OCI-LY7 (cell line): ENCODE measurements at regions of chr1 and their contacts with region 1.

Region 1: GRCh38 chr1:116330245-116330629 is 42.8 kb upstream of the ATP1A1 start:
- DNase-seq: peak; percentile 89
- H3K4me3 ChIP-seq: peak overlapping the region; percentile 37
- H3K27ac ChIP-seq: peak overlapping the region; percentile 89
- H3K4me1 ChIP-seq: peaks cover 100% of the 10 kb centered on the region
- CTCF ChIP-seq: no peak

Region 2: DNA sequence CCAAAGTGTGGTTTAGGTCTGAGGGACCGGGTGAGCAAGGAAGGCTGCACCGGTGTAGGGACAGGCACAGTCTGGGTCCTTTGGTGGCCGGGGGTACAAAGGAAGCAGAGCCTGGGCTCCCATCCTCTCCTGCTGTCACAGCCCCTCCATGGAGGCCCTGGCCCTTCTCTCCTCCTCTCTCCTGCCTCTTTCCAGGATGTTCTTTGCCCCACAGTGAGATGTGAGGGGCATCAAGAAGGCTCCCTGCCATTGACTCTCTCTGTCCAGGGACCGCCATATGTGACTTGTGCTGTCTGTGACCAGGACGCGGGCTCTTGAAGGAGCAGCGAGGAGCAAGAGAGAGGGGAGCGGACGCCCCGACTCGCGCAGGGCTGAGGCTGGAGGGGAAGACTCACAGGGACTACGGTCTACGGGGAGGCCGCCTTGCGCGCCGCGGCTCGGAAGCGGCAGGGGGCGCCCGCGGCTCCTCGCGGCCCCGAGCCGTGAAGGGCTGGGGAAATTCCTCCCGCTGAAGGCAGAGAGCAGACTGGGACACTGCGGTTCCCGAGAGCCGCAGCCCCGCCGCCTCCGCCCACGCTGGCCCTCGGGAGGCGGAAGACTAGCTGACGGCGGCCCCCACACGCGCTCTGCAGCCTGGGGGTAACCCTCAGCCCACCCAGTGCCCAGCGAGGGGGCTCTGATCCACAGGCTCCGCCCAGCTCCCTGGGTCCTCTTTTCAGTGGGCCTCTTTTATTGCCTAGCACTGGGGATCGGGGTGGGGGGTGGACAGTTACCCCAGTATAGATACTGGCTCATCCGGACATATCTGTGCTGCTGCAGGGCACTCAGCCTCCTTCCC is 178.3 kb before region 1 on chr1:
- CTCF ChIA-PET with region 1: no interaction called
- POLR2A ChIA-PET with region 1: interaction called, 4 read pairs
- intact Hi-C with region 1: loop called (anchors 2 kb)
- DNase-seq: peak; percentile 82
- H3K4me3 ChIP-seq: peak overlapping the region; percentile 58
- H3K27ac ChIP-seq: no peak overlapping the region
- H3K4me1 ChIP-seq: peaks cover 11% of the 10 kb centered on the region
- CTCF ChIP-seq: peak; percentile 84

Region 3: GRCh38 chr1:116232989-116233514 is 97.2 kb before region 1 on chr1:
- CTCF ChIA-PET with region 1: no interaction called
- POLR2A ChIA-PET with region 1: interaction called, 3 read pairs
- intact Hi-C with region 1: loop called (anchors 5 kb)
- DNase-seq: peak; percentile 76
- H3K4me3 ChIP-seq: no peak overlapping the region
- H3K27ac ChIP-seq: peak overlapping the region; percentile 26
- H3K4me1 ChIP-seq: peaks cover 54% of the 10 kb centered on the region
- CTCF ChIP-seq: peak; percentile 75

Region 4: GRCh38 chr1:116257341-116257767 is 72.9 kb before region 1 on chr1:
- CTCF ChIA-PET with region 1: no interaction called
- POLR2A ChIA-PET with region 1: interaction called, 4 read pairs
- intact Hi-C with region 1: loop called (anchors 1 kb)
- DNase-seq: peak; percentile 97
- H3K4me3 ChIP-seq: peak overlapping the region; percentile 24
- H3K27ac ChIP-seq: peak overlapping the region; percentile 93
- H3K4me1 ChIP-seq: peaks cover 90% of the 10 kb centered on the region
- CTCF ChIP-seq: no peak

Region 5: GRCh38 chr1:116372587-116373444 is 42.6 kb after region 1 on chr1 and contains the start of gene ATP1A1:
- CTCF ChIA-PET with region 1: no interaction called
- POLR2A ChIA-PET with region 1: interaction called, 8 read pairs
- intact Hi-C with region 1: loop called (anchors 1 kb)
- DNase-seq: peak; percentile 96
- H3K4me3 ChIP-seq: peak within 1 kb of the TSS; percentile 74
- H3K27ac ChIP-seq: peak within 1 kb of the TSS; percentile 70
- H3K4me1 ChIP-seq: peaks cover 38% of the 10 kb centered on the region
- CTCF ChIP-seq: 0 out of 2 replicates have a peak, but pooled peaks have one; percentile 17
- total RNA-seq, gene ATP1A1: 66.8 and 74.4 TPM in 2 replicates

Region 6: GRCh38 chr1:116418091-116418830 is 88.0 kb after region 1 on chr1:
- CTCF ChIA-PET with region 1: interaction called, 3 read pairs
- POLR2A ChIA-PET with region 1: no interaction called
- intact Hi-C with region 1: loop called (anchors 2 kb)
- DNase-seq: peak; percentile 92
- H3K4me3 ChIP-seq: peak overlapping the region; percentile 87
- H3K27ac ChIP-seq: peak overlapping the region; percentile 43
- H3K4me1 ChIP-seq: peaks cover 30% of the 10 kb centered on the region
- CTCF ChIP-seq: no peak

Region 7: DNA sequence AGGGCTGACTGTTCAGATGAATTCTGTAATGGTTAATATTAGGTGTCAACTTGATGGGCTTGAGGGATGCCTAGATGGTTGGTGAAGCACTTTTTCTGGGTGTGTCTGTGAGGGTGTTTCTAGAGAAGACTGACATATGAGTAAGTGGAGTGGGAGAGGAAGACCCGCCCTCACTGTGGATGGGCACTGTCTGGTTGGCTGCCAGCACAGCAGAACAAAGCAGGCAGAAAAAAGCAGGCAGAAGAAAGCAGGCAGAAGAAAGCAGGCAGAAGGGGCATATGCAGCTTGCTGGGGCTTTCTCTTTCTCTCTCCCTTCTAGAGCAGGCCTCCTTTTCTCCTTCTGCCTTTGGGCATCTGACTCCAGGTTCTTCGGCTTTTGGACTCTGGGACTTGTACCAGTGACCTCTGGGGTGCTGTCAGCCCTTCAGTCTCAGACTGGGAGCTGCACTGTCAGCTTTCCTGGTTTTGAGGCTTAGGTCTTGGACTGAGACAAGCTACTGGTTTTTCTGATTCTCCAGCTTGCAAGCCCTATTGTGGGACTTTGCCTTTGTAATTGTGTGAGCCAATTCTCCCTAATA is 381.1 kb after region 1 on chr1:
- CTCF ChIA-PET with region 1: no interaction called
- POLR2A ChIA-PET with region 1: no interaction called
- intact Hi-C with region 1: no loop called
- DNase-seq: peak; percentile 16
- H3K4me3 ChIP-seq: no peak overlapping the region
- H3K27ac ChIP-seq: no peak overlapping the region
- H3K4me1 ChIP-seq: peaks cover 10% of the 10 kb centered on the region
- CTCF ChIP-seq: no peak